Activated naive CD4-positive, alpha-beta T cell treated with anti-CD3 and anti-CD28 coated beads for 36 hours (primary cell): ENCODE measurements at regions of chr3 and their contacts with region 1.

Region 1: DNA sequence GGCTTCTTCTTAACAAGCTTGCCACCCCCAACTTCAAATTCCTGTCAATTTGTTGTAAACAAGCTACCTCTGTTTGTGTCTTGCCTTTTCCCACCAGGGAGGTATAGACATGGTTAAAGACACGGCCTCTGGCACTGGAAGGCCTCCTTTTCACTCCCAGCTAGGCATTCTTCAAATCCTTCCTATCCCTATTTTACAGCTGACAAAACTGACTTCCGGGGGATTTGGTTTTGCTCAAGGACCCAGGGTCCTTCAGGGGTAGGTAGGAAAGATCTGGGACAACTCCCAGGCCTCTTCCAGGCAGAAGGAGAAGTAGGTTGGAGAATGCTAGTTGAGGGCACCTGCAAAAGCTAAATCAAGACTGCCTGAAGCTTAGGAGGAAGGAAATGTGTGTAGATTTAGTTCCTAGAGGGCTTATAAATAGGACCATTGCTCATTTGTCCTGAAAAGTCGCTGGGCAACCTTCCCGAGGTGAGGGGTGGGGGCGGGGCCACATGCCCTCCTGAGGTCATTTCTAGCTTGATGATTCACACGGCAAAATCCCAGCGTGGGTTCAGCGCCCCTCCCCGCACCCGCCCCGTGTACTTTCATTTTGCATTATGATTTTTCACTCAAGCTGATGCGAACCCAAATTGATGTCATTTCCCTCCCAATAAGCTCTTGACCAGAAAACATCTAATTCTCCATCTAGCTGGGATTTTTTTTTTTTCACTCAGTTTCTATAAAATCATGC is 365.5 kb downstream of the SHQ1 start:
- DNase-seq: peak; percentile 96
- H3K4me3 Mint-ChIP-seq: peak overlapping the region; percentile 4
- H3K27ac Mint-ChIP-seq: peak overlapping the region; percentile 88
- H3K4me1 Mint-ChIP-seq: peaks cover 68% of the 10 kb centered on the region
- H3K27me3 Mint-ChIP-seq: no peaks in the 10 kb centered on the region

Region 2: GRCh38 chr3:72100601-72101187 is 382.1 kb before region 1 on chr3:
- CTCF ChIA-PET with region 1: no interaction called
- intact Hi-C with region 1: loop called (anchors 2 kb)
- DNase-seq: peak; percentile 99
- H3K4me3 Mint-ChIP-seq: peak overlapping the region; percentile 79
- H3K27ac Mint-ChIP-seq: peak overlapping the region; percentile 89
- H3K4me1 Mint-ChIP-seq: peaks cover 26% of the 10 kb centered on the region
- H3K27me3 Mint-ChIP-seq: peaks cover 7% of the 10 kb centered on the region

Region 3: DNA sequence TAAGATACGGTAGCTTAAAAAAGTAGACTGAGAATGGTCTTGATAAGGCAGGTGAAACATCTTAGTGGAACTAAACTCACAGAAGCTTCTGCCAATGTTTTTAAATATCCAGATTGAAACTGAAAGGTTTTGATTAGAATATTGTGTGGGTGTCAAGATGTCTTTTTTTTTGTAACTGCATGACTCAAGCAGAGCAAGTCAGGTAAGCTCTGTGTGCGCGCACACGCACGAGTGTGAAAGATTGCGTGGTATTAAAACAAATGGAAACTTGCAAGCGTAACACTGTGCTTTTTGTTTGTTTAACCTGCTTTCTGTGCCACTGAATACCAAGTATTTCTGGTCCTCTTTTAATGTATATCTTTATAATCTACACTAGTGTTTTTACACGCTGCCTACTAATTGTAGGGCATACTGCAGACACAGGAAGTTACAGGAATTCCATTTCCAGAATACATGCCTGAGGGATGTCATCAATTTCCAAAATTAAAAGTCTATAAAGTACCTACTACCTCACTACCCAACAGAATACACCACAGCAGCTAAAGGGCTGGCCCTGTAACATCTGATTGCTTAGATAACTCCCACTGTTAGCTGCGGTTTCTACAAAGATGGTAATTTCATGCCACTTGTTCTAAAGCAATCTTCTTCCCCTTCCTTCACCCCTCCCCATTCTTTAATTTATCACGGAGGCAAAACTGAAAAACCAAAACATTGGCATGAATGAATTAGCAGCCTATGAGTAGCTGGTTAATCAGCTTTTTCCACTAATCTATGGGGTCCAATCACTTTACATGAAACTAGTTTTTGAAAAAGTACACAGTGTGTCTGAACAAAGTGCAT is 107.3 kb before region 1 on chr3:
- CTCF ChIA-PET with region 1: no interaction called
- intact Hi-C with region 1: loop called (anchors 2 kb)
- DNase-seq: peak; percentile 70
- H3K4me3 Mint-ChIP-seq: peak overlapping the region; percentile 20
- H3K27ac Mint-ChIP-seq: peak overlapping the region; percentile 82
- H3K4me1 Mint-ChIP-seq: peaks cover 62% of the 10 kb centered on the region
- H3K27me3 Mint-ChIP-seq: no peaks in the 10 kb centered on the region

Region 4: GRCh38 chr3:72458358-72458757 is 24.4 kb before region 1 on chr3:
- CTCF ChIA-PET with region 1: no interaction called
- intact Hi-C with region 1: loop called (anchors 1 kb)
- DNase-seq: no peak
- H3K4me3 Mint-ChIP-seq: no peak overlapping the region
- H3K27ac Mint-ChIP-seq: no peak overlapping the region
- H3K4me1 Mint-ChIP-seq: peaks cover 17% of the 10 kb centered on the region
- H3K27me3 Mint-ChIP-seq: peaks cover 17% of the 10 kb centered on the region

Region 5: GRCh38 chr3:72515281-72515680 is 32.5 kb after region 1 on chr3:
- CTCF ChIA-PET with region 1: no interaction called
- intact Hi-C with region 1: no loop called
- DNase-seq: no peak
- H3K4me3 Mint-ChIP-seq: no peak overlapping the region
- H3K27ac Mint-ChIP-seq: no peak overlapping the region
- H3K4me1 Mint-ChIP-seq: peaks cover 7% of the 10 kb centered on the region
- H3K27me3 Mint-ChIP-seq: no peaks in the 10 kb centered on the region

Region 6: DNA sequence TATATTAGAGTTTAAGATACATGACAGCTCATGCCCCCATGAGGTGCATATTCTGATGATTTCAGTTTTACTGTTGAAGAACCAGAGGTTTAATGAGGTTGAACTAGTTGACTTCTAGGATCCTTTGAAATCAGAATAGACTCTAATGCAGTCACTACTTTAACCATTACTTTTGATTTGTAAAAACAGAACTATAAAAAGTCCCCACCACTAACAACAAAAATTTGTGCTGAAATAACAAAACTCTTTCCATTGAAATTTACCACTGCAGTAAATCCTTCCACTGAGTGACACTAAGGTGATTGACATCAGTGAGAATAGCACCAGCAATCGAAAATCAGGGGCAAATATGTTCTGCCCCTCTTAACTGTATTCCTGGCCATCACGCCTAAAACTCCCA is 151.4 kb after region 1 on chr3:
- CTCF ChIA-PET with region 1: interaction called, 3 read pairs
- intact Hi-C with region 1: loop called (anchors 1 kb)
- DNase-seq: peak; percentile 19
- H3K4me3 Mint-ChIP-seq: no peak overlapping the region
- H3K27ac Mint-ChIP-seq: no peak overlapping the region
- H3K4me1 Mint-ChIP-seq: peaks cover 39% of the 10 kb centered on the region
- H3K27me3 Mint-ChIP-seq: peaks cover 10% of the 10 kb centered on the region

Region 7: GRCh38 chr3:72847751-72848702 is 365.3 kb after region 1 on chr3 and contains the start of gene SHQ1:
- CTCF ChIA-PET with region 1: no interaction called
- intact Hi-C with region 1: loop called (anchors 2 kb)
- DNase-seq: peak; percentile 98
- H3K4me3 Mint-ChIP-seq: peak within 1 kb of the TSS; percentile 97
- H3K27ac Mint-ChIP-seq: peak within 1 kb of the TSS; percentile 57
- H3K4me1 Mint-ChIP-seq: peaks cover 47% of the 10 kb centered on the region
- H3K27me3 Mint-ChIP-seq: no peaks in the 10 kb centered on the region
- total RNA-seq, gene SHQ1: 19.9 to 20.5 TPM